Vagina (tissue), 2 donors: ENCODE measurements at regions of chr2 and their contacts with region 1.

Region 1: GRCh38 chr2:27095745-27096651 is 9.4 kb downstream of the KHK start:
- DNase-seq: no peak
- H3K4me3 ChIP-seq: peak overlapping the region; percentile 34 to 43
- H3K27ac ChIP-seq: no peak overlapping the region
- H3K4me1 ChIP-seq: peaks cover 8% of the 10 kb centered on the region
- H3K27me3 ChIP-seq: no peaks in the 10 kb centered on the region
- CTCF ChIP-seq: no peak
- POLR2A ChIP-seq: no peak

Region 2: DNA sequence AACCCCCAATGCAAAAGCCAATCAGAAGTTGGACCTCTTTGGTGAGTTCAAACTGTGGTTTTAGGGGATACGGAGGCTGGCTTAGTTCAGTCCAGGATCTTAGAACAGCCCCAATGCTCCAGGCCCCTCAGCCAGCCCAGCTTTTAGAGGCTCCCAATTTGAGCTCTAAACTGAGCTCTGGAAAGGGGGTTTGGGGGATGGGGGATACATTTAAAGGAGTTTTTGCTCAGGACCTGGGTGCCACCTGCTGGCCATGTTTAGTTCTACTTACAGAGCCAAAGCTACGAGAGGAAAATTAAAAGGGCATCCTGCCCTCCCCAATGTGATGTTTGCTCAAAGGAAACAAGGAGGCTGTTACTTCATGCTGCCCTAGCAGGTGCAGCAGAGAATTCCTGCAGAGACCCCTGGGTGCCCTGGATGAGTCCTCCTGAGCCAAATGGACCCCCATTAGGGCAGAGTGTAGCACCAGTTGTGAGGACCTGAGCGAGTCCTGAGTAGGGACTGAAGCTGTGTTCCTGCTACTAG is 79.1 kb before region 1 on chr2:
- intact Hi-C with region 1: no loop called
- DNase-seq: no peak
- H3K4me3 ChIP-seq: no peak overlapping the region
- H3K27ac ChIP-seq: no peak overlapping the region
- H3K4me1 ChIP-seq: peaks cover 31% of the 10 kb centered on the region
- H3K27me3 ChIP-seq: no peaks in the 10 kb centered on the region
- CTCF ChIP-seq: peak; percentile 23 to 67 (median 49)
- POLR2A ChIP-seq: no peak

Region 3: DNA sequence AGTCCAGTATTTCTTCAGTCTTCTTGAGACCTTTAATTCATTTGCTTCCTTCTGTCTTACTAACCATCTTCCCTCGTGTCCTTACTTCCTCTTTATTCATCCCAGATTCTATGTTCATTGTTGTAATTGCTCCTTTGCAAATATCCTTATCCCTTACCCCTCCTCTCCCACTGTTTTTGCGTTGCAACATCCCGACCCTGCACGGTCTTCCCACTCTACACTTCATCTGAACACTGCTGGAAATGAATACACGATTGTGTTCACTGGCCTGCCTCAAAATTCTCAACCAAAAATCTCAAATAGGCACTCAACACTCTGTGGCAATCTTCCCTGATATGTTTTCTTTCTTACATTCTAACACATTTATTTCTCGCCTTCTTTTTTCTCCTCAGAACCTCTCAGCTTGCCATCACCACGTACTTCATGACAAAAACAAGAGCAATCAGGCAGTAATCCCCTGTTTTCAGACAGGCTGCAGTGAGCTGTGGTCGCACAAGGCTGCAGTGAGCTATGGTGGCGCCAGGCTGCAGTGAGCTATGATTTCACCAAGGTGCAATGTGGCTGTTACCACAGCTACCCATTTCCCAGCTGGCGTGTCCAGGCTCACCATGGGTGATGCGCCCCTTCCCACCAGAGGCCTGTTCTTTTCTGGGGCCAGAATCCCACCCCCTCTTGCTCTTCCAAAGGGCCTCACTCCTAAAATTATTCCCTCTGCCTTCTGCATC is 78.5 kb after region 1 on chr2:
- intact Hi-C with region 1: loop called (anchors 2 kb)
- DNase-seq: no peak
- H3K4me3 ChIP-seq: no peak overlapping the region
- H3K27ac ChIP-seq: no peak overlapping the region
- H3K4me1 ChIP-seq: no peaks in the 10 kb centered on the region
- H3K27me3 ChIP-seq: no peaks in the 10 kb centered on the region
- CTCF ChIP-seq: no peak
- POLR2A ChIP-seq: no peak

Region 4: GRCh38 chr2:27271631-27272340 is 175.8 kb after region 1 on chr2:
- intact Hi-C with region 1: no loop called
- DNase-seq: no peak
- H3K4me3 ChIP-seq: no peak overlapping the region
- H3K27ac ChIP-seq: no peak overlapping the region
- H3K4me1 ChIP-seq: no peaks in the 10 kb centered on the region
- H3K27me3 ChIP-seq: no peaks in the 10 kb centered on the region
- CTCF ChIP-seq: no peak
- POLR2A ChIP-seq: no peak

Region 5: DNA sequence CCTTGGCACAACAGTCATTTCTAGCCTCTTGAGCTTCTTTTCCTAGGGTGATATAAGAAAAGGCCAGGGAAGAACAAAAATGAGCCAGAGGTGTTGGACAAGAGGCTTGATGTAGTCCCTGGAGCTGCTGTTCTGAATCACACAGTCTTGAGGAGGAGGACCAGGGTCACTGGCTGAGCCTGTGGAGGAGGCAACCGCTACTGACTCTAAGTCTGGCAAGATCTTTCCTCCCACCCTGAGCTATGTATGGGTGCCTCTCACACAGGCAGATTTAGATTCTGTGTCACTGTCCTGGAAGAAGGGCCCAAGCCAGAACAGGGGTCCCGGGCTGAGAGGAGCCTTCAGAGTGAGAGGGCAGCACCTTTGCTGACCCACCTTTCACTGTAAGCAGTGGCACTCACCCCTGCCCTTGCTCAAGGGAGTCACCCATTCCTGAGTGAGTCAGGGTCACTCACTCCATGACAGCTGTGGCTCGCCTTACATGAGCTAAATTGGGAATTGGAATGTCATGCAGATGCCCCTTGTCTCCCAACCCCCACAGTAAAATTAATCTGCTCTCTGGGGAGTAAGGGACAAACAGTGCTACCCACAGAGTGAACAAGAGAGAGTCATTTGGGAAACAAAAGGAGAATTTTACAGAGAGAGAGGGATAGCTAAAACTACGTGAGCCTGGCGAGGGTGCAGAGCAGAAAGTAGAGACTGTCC is 186.0 kb after region 1 on chr2 and contains the start of gene TRIM54:
- intact Hi-C with region 1: loop called (anchors 5 kb)
- DNase-seq: no peak
- H3K4me3 ChIP-seq: no peak within 1 kb of the TSS
- H3K27ac ChIP-seq: no peak within 1 kb of the TSS
- H3K4me1 ChIP-seq: no peaks in the 10 kb centered on the region
- H3K27me3 ChIP-seq: no peaks in the 10 kb centered on the region
- CTCF ChIP-seq: no peak
- POLR2A ChIP-seq: no peak
- total RNA-seq, gene TRIM54: 2.5 TPM